OCI-LY7 (cell line): ENCODE measurements at regions of chr17 and their contacts with region 1.

Region 1: DNA sequence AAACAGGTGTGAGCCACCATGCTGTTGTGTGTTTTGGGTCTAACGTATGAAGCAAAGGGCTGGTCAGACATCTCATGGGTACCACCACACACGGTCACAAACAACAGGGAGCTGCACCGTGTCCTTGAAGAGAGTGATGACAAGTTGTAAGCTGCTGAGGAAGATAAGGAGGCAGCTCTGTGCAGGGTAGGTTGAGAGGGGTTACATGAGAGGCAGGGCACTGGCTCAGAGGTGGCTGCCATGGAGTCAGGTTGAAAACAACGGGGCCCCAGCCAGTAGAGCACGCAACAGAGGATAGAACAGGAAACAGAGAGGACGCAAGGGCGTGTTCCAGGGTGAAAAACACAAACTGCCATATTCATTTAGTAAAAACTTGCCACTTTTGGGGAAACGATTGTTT is 52.2 kb downstream of the TRARG1 start:
- DNase-seq: no peak
- H3K4me3 ChIP-seq: no peak overlapping the region
- H3K27ac ChIP-seq: no peak overlapping the region
- H3K4me1 ChIP-seq: no peaks in the 10 kb centered on the region
- CTCF ChIP-seq: no peak

Region 2: GRCh38 chr17:1055751-1056645 is 275.7 kb before region 1 on chr17:
- CTCF ChIA-PET with region 1: no interaction called
- POLR2A ChIA-PET with region 1: no interaction called
- intact Hi-C with region 1: loop called (anchors 5 kb)
- DNase-seq: peak; percentile 32
- H3K4me3 ChIP-seq: no peak overlapping the region
- H3K27ac ChIP-seq: no peak overlapping the region
- H3K4me1 ChIP-seq: no peaks in the 10 kb centered on the region
- CTCF ChIP-seq: peak; percentile 71

Region 3: DNA sequence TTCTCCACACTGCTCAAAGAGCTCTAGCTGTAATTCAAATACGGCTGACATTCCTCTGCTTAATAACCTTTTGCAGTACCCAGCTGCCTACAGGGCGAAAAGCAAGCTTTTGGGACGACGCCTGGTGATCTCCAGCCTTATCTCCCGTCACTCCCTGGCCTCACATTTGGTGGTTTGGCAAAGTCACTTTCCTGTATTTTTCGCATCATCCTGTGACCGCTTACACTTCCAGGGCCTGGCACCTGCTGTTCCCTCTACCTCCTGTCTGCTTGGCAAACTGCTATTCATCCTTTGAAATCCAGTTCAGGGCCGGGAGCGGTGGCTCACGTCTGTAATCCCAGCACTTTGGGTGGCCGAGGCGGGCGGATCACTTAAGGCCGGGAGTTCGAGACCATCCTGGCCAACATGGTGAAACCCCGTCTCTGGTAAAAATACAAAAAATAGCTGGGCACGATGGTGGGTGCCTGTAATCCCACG is 64.2 kb before region 1 on chr17:
- CTCF ChIA-PET with region 1: no interaction called
- POLR2A ChIA-PET with region 1: no interaction called
- intact Hi-C with region 1: loop called (anchors 2 kb)
- DNase-seq: no peak
- H3K4me3 ChIP-seq: peak overlapping the region; percentile 70
- H3K27ac ChIP-seq: peak overlapping the region; percentile 44
- H3K4me1 ChIP-seq: peaks cover 15% of the 10 kb centered on the region
- CTCF ChIP-seq: no peak

Region 4: GRCh38 chr17:1275962-1276736 is 55.6 kb before region 1 on chr17:
- CTCF ChIA-PET with region 1: no interaction called
- POLR2A ChIA-PET with region 1: no interaction called
- intact Hi-C with region 1: loop called (anchors 1 kb)
- DNase-seq: peak; percentile 69
- H3K4me3 ChIP-seq: no peak overlapping the region
- H3K27ac ChIP-seq: no peak overlapping the region
- H3K4me1 ChIP-seq: no peaks in the 10 kb centered on the region
- CTCF ChIP-seq: peak; percentile 87

Region 5: GRCh38 chr17:1434150-1434549 is 102.4 kb after region 1 on chr17:
- CTCF ChIA-PET with region 1: no interaction called
- POLR2A ChIA-PET with region 1: no interaction called
- intact Hi-C with region 1: no loop called
- DNase-seq: no peak
- H3K4me3 ChIP-seq: no peak overlapping the region
- H3K27ac ChIP-seq: no peak overlapping the region
- H3K4me1 ChIP-seq: peaks cover 9% of the 10 kb centered on the region
- CTCF ChIP-seq: no peak